ENCODE measurements at regions of chr6 and their contacts with region 1.

Region 1: DNA sequence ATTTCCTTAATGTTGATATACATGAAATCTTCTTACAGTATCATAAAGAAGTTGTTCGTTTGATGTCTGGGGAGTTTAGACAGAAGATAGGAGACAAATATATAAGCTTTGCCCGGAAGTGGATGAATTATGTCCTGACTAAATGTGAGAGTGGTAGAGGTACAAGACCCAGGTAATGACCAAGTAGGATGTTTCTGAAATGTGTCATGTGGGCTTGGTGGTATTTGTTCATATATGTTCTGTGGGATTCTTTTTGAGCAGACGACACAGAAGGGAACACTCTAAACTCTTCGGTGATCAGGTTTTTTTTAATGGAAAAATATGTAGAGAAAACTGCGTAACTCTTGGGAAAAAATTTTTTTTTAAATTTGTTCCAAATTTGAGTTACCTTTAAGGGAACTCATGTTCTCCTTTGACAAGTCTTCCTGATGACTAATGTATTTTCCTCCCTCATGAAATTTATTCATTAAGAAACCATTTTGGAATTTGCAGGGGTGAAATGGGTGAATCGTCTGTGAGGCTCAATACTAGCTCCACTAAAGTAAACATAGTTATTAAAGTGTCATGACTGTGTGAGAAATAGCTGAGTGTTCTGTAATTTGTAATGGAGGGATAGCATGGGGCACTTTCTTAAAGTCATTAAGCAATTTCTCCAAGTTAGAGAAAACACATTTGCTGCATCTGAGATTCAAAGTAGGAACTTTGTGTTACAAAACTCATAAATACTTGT is 100.6 kb downstream of the MAP3K4 start:
- DNase-seq: no peak
- H3K4me3 ChIP-seq: no peak overlapping the region
- H3K27ac ChIP-seq: peak overlapping the region in 2 of 4 donors; percentile 29 to 46
- H3K4me1 ChIP-seq: peaks cover 0 to 12% (median 4%) of the 10 kb centered on the region in 4 donors
- H3K27me3 ChIP-seq: no peaks in the 10 kb centered on the region
- CTCF ChIP-seq: no peak
- EP300 ChIP-seq: peak in 1 of 4 donors; percentile 14
- POLR2A ChIP-seq: no peak

Region 2: DNA sequence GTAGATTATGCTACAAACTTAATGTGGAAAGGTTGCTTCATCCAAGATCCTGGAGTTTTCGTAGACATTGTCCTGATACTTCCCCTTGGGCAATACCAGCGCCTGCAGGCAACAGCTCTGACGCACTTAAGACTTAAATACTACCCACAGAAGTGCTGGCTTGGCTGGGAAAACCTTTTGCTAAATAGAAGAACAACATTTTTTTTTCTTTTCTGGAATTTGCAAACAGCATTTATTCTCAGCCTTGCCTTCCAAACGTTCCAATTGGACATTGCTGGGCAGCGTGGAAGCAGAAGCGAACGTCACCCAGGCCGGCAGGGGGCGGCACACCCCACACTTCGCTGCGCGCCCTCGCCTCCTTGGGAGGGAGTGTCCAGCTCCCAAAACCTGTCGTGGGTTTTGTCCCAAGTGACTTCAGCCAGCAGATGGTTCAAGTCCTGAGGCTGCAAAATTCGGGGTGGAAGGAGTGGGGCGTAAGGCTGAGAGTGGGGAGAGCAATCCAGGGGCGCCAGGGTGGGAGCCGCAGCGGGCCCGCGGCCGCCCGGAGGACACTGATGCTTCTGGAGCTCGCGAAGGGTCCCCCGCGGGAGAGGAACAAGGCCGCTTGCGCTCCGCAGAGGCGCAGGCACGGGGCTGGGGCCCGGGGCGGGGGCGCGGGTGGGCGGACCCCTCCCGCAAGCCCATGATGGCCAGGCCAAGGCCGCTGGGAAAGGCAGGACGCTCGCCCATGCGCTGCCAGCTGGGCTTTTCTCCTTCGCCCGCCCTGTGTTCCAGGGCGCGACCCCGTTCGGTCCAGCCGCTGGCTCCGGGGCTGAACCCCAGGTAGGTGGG is 161.4 kb before region 1 on chr6:
- intact Hi-C with region 1: loop called (anchors 10 kb)
- DNase-seq: peak; percentile 89
- H3K4me3 ChIP-seq: peak overlapping the region; percentile 32 to 58 (median 52)
- H3K27ac ChIP-seq: peak overlapping the region in 3 of 4 donors; percentile 22 to 62 (median 41)
- H3K4me1 ChIP-seq: peaks cover 0 to 12% (median 8%) of the 10 kb centered on the region in 4 donors
- H3K27me3 ChIP-seq: peaks cover 0 to 8% (median 0%) of the 10 kb centered on the region in 3 donors
- CTCF ChIP-seq: peak; percentile 87 to 93 (median 89)
- EP300 ChIP-seq: peak in 2 of 4 donors; percentile 9 to 13
- POLR2A ChIP-seq: no peak